OCI-LY7 (cell line): ENCODE measurements at regions of chr6 and their contacts with region 1.

Region 1: GRCh38 chr6:119742188-119742803 is 392.7 kb upstream of the MAN1A1 start:
- DNase-seq: peak; percentile 79
- H3K4me3 ChIP-seq: no peak overlapping the region
- H3K27ac ChIP-seq: no peak overlapping the region
- H3K4me1 ChIP-seq: peaks cover 13% of the 10 kb centered on the region
- CTCF ChIP-seq: peak; percentile 98

Region 2: DNA sequence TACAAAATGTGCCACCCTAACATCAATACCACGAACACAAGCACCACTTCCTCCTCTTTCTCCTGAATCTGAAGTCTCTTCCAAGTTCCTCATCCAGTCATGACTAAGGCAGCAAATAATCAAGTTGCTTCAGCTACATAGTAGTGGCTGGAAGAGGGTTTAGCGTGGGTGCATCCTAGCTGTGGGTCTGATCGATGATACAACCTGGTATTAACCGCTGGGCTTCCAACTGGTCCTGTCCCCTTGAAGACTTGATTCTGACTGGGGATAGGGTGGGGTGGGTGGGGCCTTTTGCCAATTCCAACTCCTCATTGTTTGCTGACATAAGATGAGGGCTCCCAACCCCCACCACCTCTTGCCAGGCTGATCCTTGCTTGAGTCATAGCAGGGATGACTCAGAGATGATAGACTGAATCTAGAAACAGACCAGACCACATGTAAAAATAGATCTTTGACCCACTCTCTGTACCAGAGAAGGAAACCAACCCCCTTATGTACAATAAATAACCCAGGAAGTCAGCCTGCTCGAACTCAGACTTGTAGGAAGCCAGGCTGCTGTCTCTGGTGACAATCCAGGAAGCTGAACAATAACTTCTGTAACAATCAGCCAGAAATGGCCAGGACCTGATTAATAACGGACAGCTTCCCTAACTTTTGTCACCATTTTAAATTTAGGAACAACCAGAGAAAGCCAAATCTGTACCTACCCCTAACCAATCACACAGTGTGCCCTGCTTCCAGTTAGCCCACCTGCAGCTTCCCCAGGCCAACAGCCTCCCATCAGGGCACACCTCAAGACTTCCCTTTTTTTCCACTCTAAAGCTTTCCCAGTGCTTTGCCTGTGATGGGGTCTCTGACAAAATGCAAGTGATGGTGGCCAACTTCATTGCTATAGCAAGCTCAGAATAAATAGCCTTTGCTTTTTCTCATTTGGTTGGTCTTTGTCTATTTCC is 594.9 kb before region 1 on chr6:
- CTCF ChIA-PET with region 1: no interaction called
- POLR2A ChIA-PET with region 1: no interaction called
- intact Hi-C with region 1: loop called (anchors 5 kb)
- DNase-seq: peak; percentile 21
- H3K4me3 ChIP-seq: no peak overlapping the region
- H3K27ac ChIP-seq: no peak overlapping the region
- H3K4me1 ChIP-seq: peaks cover 6% of the 10 kb centered on the region
- CTCF ChIP-seq: no peak

Region 3: DNA sequence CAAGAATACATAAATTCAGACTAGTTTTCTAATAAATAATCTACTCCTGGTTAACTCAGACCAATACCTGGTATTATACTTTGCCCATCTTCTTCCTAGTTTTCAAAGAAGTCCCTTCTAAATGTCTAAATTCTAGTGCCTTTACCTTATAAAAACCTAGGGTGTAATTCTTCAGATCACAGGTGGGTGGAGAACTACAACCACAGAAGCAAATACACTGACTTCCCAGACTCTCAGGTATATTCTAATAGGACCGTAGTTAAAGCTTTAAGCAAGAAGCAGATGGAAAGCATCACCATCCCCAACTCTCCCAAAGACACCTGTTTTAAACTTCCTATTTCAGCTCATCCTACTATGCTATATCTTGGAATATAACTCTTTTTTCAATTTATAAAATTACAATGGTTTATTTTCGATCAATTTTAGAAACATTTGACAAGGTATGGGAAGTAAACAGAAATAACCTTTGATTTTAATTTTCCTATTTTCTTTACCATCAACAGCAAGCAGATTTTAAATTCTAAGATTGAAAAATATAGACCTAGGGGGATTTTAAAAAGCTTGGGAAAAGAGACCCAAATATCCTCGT is 408.5 kb before region 1 on chr6:
- CTCF ChIA-PET with region 1: no interaction called
- POLR2A ChIA-PET with region 1: no interaction called
- intact Hi-C with region 1: loop called (anchors 5 kb)
- DNase-seq: peak; percentile 51
- H3K4me3 ChIP-seq: no peak overlapping the region
- H3K27ac ChIP-seq: no peak overlapping the region
- H3K4me1 ChIP-seq: peaks cover 71% of the 10 kb centered on the region
- CTCF ChIP-seq: peak; percentile 81

Region 4: GRCh38 chr6:119978274-119978889 is 236.1 kb after region 1 on chr6:
- CTCF ChIA-PET with region 1: no interaction called
- POLR2A ChIA-PET with region 1: no interaction called
- intact Hi-C with region 1: loop called (anchors 2 kb)
- DNase-seq: peak; percentile 46
- H3K4me3 ChIP-seq: no peak overlapping the region
- H3K27ac ChIP-seq: no peak overlapping the region
- H3K4me1 ChIP-seq: no peaks in the 10 kb centered on the region
- CTCF ChIP-seq: peak; percentile 83

Region 5: DNA sequence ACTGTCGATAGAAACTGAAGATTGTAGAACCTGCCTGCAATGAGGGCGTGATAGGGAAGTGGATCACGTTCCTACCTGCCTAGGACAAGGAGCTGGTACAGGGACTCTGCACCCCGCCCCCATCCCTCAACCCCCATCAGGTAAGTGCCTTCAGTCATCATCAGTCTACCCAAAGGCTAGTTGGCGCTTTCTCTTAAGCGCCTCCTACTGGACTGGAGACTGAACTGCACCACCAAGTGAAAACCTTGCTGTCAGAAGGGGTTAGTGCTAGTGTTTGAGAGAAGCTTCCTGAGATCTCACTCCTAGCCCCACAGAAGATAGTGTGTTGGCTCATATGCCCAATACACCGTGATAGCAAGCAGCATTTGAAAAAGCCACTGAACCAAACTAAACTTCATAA is 313.8 kb after region 1 on chr6:
- CTCF ChIA-PET with region 1: no interaction called
- POLR2A ChIA-PET with region 1: no interaction called
- intact Hi-C with region 1: loop called (anchors 5 kb)
- DNase-seq: peak; percentile 36
- H3K4me3 ChIP-seq: no peak overlapping the region
- H3K27ac ChIP-seq: no peak overlapping the region
- H3K4me1 ChIP-seq: no peaks in the 10 kb centered on the region
- CTCF ChIP-seq: peak; percentile 79